A673 (cell line): ENCODE measurements at regions of chr17 and their contacts with region 1.

Region 1: DNA sequence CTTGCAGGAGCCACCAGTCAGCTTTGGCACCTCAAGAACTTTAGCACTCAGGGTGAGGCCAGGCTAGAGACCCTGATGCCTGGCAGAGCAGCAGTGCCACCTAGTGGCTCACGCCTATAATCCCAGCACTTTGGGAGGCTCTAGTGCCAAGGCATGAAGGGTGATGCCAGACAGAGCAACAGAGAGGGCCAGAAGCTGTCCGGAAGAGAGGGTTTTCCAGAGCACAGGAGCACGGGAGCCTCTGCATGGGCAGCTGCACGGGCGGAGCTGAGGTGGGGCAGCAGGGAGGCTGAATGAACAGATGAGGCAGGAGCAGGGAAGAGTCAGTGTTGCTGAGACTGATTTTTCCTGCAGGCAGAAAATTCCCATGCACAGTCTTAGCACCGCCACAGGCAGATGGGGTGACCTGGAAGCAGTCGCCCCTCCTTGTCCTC is 38.9 kb downstream of the MYH3 start:
- DNase-seq: peak; percentile 85
- H3K4me3 ChIP-seq: no peak overlapping the region
- H3K27ac ChIP-seq: no peak overlapping the region
- H3K4me1 ChIP-seq: no peaks in the 10 kb centered on the region
- H3K27me3 ChIP-seq: no peaks in the 10 kb centered on the region
- CTCF ChIP-seq: peak; percentile 93

Region 2: GRCh38 chr17:9924735-9925191 is 693.5 kb before region 1 on chr17:
- CTCF ChIA-PET with region 1: interaction called, 7 read pairs
- POLR2A ChIA-PET with region 1: no interaction called
- intact Hi-C with region 1: loop called (anchors 2 kb)
- DNase-seq: peak; percentile 85
- H3K4me3 ChIP-seq: no peak overlapping the region
- H3K27ac ChIP-seq: no peak overlapping the region
- H3K4me1 ChIP-seq: no peaks in the 10 kb centered on the region
- H3K27me3 ChIP-seq: no peaks in the 10 kb centered on the region
- CTCF ChIP-seq: peak; percentile 83

Region 3: DNA sequence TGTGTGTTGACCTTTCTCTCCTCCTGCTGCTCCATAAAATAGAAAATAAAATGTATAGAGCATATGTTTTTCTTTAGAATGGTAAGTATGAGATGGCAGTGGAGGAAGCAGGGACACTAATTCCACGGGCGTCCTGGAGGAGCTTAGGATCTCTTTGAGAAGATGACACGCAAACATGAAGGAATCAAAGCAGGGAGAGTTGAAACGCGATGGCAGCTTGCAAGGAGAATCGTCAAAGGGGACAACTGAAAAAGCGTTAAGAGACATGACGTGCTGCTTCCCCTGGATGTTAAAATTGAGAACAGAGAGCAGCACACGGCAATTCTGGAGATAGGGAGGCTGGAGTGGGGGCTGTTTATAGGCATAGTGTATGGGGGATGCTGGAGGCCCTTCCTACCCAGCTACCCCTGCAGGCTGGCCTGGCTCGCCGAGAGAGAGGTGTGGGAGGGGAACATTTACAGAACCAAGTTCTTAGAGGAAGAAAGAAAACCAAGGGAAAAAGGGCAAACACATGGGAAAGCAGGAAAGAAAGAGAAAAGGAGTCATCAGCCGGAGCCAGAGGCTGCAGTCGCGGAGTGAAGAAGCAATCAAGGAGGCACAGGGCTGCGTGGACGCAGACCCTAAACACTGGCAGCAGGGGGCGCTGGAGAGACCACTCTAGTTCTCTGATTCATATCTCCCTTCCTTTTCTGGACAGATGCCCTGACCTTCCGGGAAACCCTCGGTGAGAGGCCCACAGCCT is 301.2 kb before region 1 on chr17:
- CTCF ChIA-PET with region 1: interaction called, 10 read pairs
- POLR2A ChIA-PET with region 1: no interaction called
- intact Hi-C with region 1: no loop called
- DNase-seq: peak; percentile 64
- H3K4me3 ChIP-seq: no peak overlapping the region
- H3K27ac ChIP-seq: no peak overlapping the region
- H3K4me1 ChIP-seq: no peaks in the 10 kb centered on the region
- H3K27me3 ChIP-seq: no peaks in the 10 kb centered on the region
- CTCF ChIP-seq: peak; percentile 85

Region 4: GRCh38 chr17:10327640-10328039 is 290.6 kb before region 1 on chr17:
- CTCF ChIA-PET with region 1: interaction called, 15 read pairs
- POLR2A ChIA-PET with region 1: interaction called, 8 read pairs
- intact Hi-C with region 1: loop called (anchors 1 kb)
- DNase-seq: peak; percentile 89
- H3K4me3 ChIP-seq: no peak overlapping the region
- H3K27ac ChIP-seq: no peak overlapping the region
- H3K4me1 ChIP-seq: no peaks in the 10 kb centered on the region
- H3K27me3 ChIP-seq: no peaks in the 10 kb centered on the region
- CTCF ChIP-seq: peak; percentile 95

Region 5: GRCh38 chr17:10697092-10698081 is 79.2 kb after region 1 on chr17 and contains the starts of genes ADPRM and SCO1:
- CTCF ChIA-PET with region 1: no interaction called
- POLR2A ChIA-PET with region 1: no interaction called
- intact Hi-C with region 1: no loop called
- DNase-seq: peak; percentile 96
- H3K4me3 ChIP-seq: peak within 1 kb of the TSS; percentile 89
- H3K27ac ChIP-seq: peak within 1 kb of the TSS; percentile 79
- H3K4me1 ChIP-seq: peaks cover 16% of the 10 kb centered on the region
- H3K27me3 ChIP-seq: no peaks in the 10 kb centered on the region
- CTCF ChIP-seq: peak; percentile 50
- total RNA-seq, gene ADPRM: 8.4 and 9.2 TPM in 2 replicates
- total RNA-seq, gene SCO1: 42.2 and 43.2 TPM in 2 replicates